ENCODE measurements at regions of chr1 and their contacts with region 1.

Region 1: GRCh38 chr1:25247024-25247828 is at the start of gene RSRP1:
- DNase-seq: peak; percentile 96 to 98
- H3K4me3 ChIP-seq: peak within 1 kb of the TSS; percentile 86
- H3K4me3 Mint-ChIP-seq: peak within 1 kb of the TSS; percentile 95
- H3K27ac Mint-ChIP-seq: peak within 1 kb of the TSS; percentile 92
- H3K4me1 ChIP-seq: peaks cover 12% of the 10 kb centered on the region
- H3K4me1 Mint-ChIP-seq: peaks cover 7% of the 10 kb centered on the region
- H3K27me3 ChIP-seq: no peaks in the 10 kb centered on the region
- H3K27me3 Mint-ChIP-seq: no peaks in the 10 kb centered on the region
- CTCF ChIP-seq: no peak
- total RNA-seq, gene RSRP1: 61.1 and 69.8 TPM in 2 replicates

Region 2: GRCh38 chr1:25232027-25232865 is 15.0 kb before region 1 on chr1 and contains the start of gene SYF2:
- CTCF ChIA-PET with region 1: interaction called, 5 read pairs
- POLR2A ChIA-PET with region 1: interaction called, 23 read pairs
- intact Hi-C with region 1: loop called (anchors 2 kb)
- DNase-seq: peak; percentile 86 to 88
- H3K4me3 ChIP-seq: peak within 1 kb of the TSS; percentile 59
- H3K4me3 Mint-ChIP-seq: no peak within 1 kb of the TSS
- H3K27ac Mint-ChIP-seq: no peak within 1 kb of the TSS
- H3K4me1 ChIP-seq: 0 out of 2 replicates have a peak, but pooled peaks cover 2% of the 10 kb centered on the region
- H3K4me1 Mint-ChIP-seq: peaks cover 7% of the 10 kb centered on the region
- H3K27me3 ChIP-seq: no peaks in the 10 kb centered on the region
- H3K27me3 Mint-ChIP-seq: no peaks in the 10 kb centered on the region
- CTCF ChIP-seq: no peak
- total RNA-seq, gene SYF2: 31.5 and 32.3 TPM in 2 replicates

Region 3: GRCh38 chr1:25430666-25431505 is 183.7 kb after region 1 on chr1 and contains the start of gene MACO1:
- CTCF ChIA-PET with region 1: no interaction called
- POLR2A ChIA-PET with region 1: no interaction called
- intact Hi-C with region 1: no loop called
- DNase-seq: peak; percentile 92 to 96
- H3K4me3 ChIP-seq: peak within 1 kb of the TSS; percentile 58
- H3K4me3 Mint-ChIP-seq: peak within 1 kb of the TSS; percentile 88
- H3K27ac Mint-ChIP-seq: peak within 1 kb of the TSS; percentile 88
- H3K4me1 ChIP-seq: no peaks in the 10 kb centered on the region
- H3K4me1 Mint-ChIP-seq: no peaks in the 10 kb centered on the region
- H3K27me3 ChIP-seq: no peaks in the 10 kb centered on the region
- H3K27me3 Mint-ChIP-seq: no peaks in the 10 kb centered on the region
- CTCF ChIP-seq: no peak
- total RNA-seq, gene MACO1: 16.8 TPM in 2 replicates

Measured in Caco-2 (cell line).